ENCODE measurements at regions of chr2 and their contacts with region 1.

Region 1: DNA sequence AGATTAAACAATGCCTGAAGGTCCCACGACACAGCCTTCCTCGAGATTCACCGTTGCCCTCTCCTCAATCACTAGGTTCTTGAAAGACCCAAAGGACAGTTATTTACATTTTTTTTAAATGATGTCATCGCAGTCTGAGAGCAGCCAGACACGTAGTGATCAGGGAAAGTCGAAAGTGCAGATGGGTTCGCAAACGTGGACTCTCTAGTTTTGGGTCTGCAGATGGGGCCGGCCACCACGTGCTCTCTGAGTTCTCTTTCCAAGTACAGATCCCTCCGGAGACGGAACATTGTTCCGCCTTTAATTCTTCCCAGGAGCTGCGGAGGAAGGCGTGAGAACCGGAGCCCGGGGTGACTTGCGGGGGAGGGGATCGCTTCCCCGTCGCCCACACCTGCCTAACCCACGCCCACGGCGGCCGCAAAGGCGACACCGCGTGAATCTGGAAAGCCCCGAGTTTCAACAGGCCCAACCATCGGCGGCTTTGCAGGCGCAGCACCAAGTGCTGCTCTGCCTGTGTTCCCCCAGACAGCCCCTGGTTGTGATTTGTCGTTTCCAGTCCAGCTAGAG is 54.3 kb downstream of the PKDCC start:
- DNase-seq: no peak
- H3K4me3 ChIP-seq: no peak overlapping the region
- H3K27ac ChIP-seq: no peak overlapping the region
- H3K4me1 ChIP-seq: peaks cover 5% of the 10 kb centered on the region
- H3K27me3 ChIP-seq: no peaks in the 10 kb centered on the region
- CTCF ChIP-seq: no peak

Region 2: DNA sequence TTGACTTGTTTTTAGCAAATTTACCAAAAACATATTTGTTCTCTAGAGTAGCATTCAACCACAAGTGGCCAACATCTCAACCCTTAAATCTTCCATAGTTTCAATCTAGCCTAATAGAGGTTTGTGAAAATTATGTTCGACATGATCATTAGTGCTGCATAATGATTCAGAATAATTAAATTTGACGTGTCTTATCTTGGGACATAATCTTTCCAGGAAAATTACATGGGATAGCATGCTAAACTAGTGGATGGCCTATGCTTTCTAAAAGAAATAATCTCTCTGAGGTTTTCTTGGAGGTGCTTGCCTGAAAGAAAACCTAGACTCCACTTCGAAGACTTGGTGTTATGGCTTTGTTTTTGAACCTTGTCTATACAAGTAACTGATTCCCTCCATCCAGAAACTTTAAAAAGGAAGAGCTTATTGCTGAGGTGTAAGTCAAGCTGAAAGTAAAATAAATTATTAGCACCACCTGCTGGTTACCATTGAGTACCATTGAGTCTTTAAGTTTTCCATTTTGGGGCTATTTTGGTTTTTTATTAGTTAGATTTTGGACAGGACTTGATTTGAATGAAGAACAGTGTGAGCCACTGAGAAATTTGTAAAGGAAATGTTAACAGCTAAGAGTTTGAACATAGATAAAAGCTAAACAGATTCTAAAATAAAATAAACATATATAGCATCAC is 226.2 kb after region 1 on chr2:
- CTCF ChIA-PET with region 1: no interaction called
- dilution Hi-C with region 1: no loop called
- in situ Hi-C with region 1: loop called (anchors 10 to 25 kb)
- intact Hi-C with region 1: no loop called
- DNase-seq: peak; percentile 6
- H3K4me3 ChIP-seq: no peak overlapping the region
- H3K27ac ChIP-seq: no peak overlapping the region
- H3K4me1 ChIP-seq: no peaks in the 10 kb centered on the region
- H3K27me3 ChIP-seq: no peaks in the 10 kb centered on the region
- CTCF ChIP-seq: peak; percentile 42 to 49

Region 3: GRCh38 chr2:42342061-42342794 is 240.1 kb after region 1 on chr2:
- CTCF ChIA-PET with region 1: no interaction called
- dilution Hi-C with region 1: no loop called
- in situ Hi-C with region 1: loop called (anchors 10 to 25 kb)
- intact Hi-C with region 1: no loop called
- DNase-seq: peak; percentile 78
- H3K4me3 ChIP-seq: no peak overlapping the region
- H3K27ac ChIP-seq: peak overlapping the region; percentile 33
- H3K4me1 ChIP-seq: peaks cover 13% of the 10 kb centered on the region
- H3K27me3 ChIP-seq: no peaks in the 10 kb centered on the region
- CTCF ChIP-seq: no peak

Measured in mammary epithelial cell (primary cell).